ENCODE measurements at regions of chr12 and their contacts with region 1.

Region 1: GRCh38 chr12:82838131-82838551 is 151.4 kb downstream of the TMTC2 start:
- DNase-seq: no peak
- H3K4me3 ChIP-seq: no peak overlapping the region
- H3K27ac ChIP-seq: no peak overlapping the region
- H3K4me1 ChIP-seq: peaks cover 25% of the 10 kb centered on the region
- H3K27me3 ChIP-seq: no peaks in the 10 kb centered on the region
- CTCF ChIP-seq: no peak
- POLR2A ChIP-seq: no peak

Region 2: DNA sequence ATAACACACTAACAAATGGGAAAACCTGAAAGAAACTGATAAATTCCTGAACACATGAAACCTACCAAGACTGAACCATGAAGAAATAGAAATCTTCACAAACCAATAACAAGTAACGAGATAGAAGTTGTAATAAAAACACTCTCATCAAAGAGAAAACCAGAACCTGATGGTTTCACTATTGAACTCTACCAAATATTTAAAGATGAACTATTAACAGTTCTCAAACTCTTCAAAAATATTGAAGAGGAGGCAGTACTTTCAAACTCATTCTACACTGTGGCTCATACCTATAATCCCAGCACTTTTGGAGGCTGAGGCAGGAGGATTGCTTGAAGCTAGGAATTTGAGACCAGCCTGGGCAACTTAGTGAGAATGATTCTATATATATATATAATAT is 199.8 kb before region 1 on chr12:
- CTCF ChIA-PET with region 1: no interaction called
- POLR2A ChIA-PET with region 1: no interaction called
- dilution Hi-C with region 1: no loop called
- intact Hi-C with region 1: no loop called
- DNase-seq: no peak
- H3K4me3 ChIP-seq: no peak overlapping the region
- H3K27ac ChIP-seq: no peak overlapping the region
- H3K4me1 ChIP-seq: no peaks in the 10 kb centered on the region
- H3K27me3 ChIP-seq: no peaks in the 10 kb centered on the region
- CTCF ChIP-seq: no peak
- POLR2A ChIP-seq: no peak

Region 3: GRCh38 chr12:82824806-82825205 is 13.3 kb before region 1 on chr12:
- CTCF ChIA-PET with region 1: no interaction called
- POLR2A ChIA-PET with region 1: no interaction called
- dilution Hi-C with region 1: no loop called
- intact Hi-C with region 1: loop called (anchors 2 kb)
- DNase-seq: no peak
- H3K4me3 ChIP-seq: no peak overlapping the region
- H3K27ac ChIP-seq: no peak overlapping the region
- H3K4me1 ChIP-seq: no peaks in the 10 kb centered on the region
- H3K27me3 ChIP-seq: no peaks in the 10 kb centered on the region
- CTCF ChIP-seq: no peak
- POLR2A ChIP-seq: no peak

Region 4: GRCh38 chr12:83161456-83161855 is 323.3 kb after region 1 on chr12:
- CTCF ChIA-PET with region 1: no interaction called
- POLR2A ChIA-PET with region 1: no interaction called
- dilution Hi-C with region 1: no loop called
- intact Hi-C with region 1: no loop called
- DNase-seq: no peak
- H3K4me3 ChIP-seq: no peak overlapping the region
- H3K27ac ChIP-seq: no peak overlapping the region
- H3K4me1 ChIP-seq: no peaks in the 10 kb centered on the region
- H3K27me3 ChIP-seq: peaks cover 0 to 2% of the 10 kb centered on the region in 2 experiments
- CTCF ChIP-seq: no peak
- POLR2A ChIP-seq: no peak